PC-3 (cell line): ENCODE measurements at regions of chr10 and their contacts with region 1.

Region 1: GRCh38 chr10:21525367-21526183 is at the start of gene SKIDA1:
- DNase-seq: peak; percentile 65
- ATAC-seq: peak; percentile 59
- H3K4me3 ChIP-seq: peak within 1 kb of the TSS; percentile 81
- H3K27ac ChIP-seq: peak within 1 kb of the TSS; percentile 81
- H3K4me1 ChIP-seq: peaks cover 18% of the 10 kb centered on the region
- H3K27me3 ChIP-seq: no peaks in the 10 kb centered on the region
- CTCF ChIP-seq: no peak
- total RNA-seq, gene SKIDA1: 0.17 and 0.26 TPM in 2 replicates

Region 2: GRCh38 chr10:21166557-21167287 is 358.9 kb before region 1 on chr10:
- CTCF ChIA-PET with region 1: no interaction called
- POLR2A ChIA-PET with region 1: no interaction called
- intact Hi-C with region 1: loop called (anchors 10 kb)
- DNase-seq: peak; percentile 12
- ATAC-seq: peak; percentile 69
- H3K4me3 ChIP-seq: peak overlapping the region; percentile 43
- H3K27ac ChIP-seq: no peak overlapping the region
- H3K4me1 ChIP-seq: peaks cover 15% of the 10 kb centered on the region
- H3K27me3 ChIP-seq: no peaks in the 10 kb centered on the region
- CTCF ChIP-seq: no peak

Region 3: DNA sequence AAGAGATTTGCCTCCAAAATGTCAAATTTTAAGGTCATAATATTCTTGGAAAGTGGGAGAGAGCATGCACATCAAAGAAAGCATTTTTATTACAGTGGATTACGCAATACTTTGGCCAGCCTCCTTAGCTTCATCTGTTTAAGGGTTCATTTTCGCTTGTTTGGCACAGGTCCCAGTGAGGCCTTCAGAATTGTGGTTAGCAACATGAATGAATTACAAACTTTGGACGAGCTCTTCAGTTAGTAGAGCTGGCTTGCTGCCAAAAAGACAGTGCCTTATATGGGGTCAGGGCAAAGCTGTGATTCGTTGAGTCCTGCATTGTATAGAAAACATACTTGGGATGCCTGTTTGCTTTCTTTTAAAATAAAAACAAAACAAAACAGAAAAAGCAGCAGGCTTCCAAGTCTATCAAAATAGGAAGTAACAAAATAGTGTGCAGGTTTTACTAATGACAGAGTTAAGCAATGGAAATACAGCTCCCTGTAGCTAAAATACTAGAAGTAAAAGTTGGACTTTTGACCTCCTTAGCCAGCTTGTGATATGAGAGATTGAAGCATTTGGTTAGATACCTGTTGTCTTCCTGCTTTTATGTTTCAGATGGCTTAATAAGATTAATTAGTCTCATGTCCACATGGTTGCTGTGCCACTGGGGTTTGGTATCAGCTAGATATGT is 199.3 kb after region 1 on chr10:
- CTCF ChIA-PET with region 1: no interaction called
- POLR2A ChIA-PET with region 1: no interaction called
- intact Hi-C with region 1: loop called (anchors 10 kb)
- DNase-seq: peak; percentile 98
- ATAC-seq: peak; percentile 93
- H3K4me3 ChIP-seq: no peak overlapping the region
- H3K27ac ChIP-seq: peak overlapping the region; percentile 20
- H3K4me1 ChIP-seq: peaks cover 29% of the 10 kb centered on the region
- H3K27me3 ChIP-seq: no peaks in the 10 kb centered on the region
- CTCF ChIP-seq: no peak